Aorta (tissue), 5 donors: ENCODE measurements at regions of chr10 and their contacts with region 1.

Region 1: DNA sequence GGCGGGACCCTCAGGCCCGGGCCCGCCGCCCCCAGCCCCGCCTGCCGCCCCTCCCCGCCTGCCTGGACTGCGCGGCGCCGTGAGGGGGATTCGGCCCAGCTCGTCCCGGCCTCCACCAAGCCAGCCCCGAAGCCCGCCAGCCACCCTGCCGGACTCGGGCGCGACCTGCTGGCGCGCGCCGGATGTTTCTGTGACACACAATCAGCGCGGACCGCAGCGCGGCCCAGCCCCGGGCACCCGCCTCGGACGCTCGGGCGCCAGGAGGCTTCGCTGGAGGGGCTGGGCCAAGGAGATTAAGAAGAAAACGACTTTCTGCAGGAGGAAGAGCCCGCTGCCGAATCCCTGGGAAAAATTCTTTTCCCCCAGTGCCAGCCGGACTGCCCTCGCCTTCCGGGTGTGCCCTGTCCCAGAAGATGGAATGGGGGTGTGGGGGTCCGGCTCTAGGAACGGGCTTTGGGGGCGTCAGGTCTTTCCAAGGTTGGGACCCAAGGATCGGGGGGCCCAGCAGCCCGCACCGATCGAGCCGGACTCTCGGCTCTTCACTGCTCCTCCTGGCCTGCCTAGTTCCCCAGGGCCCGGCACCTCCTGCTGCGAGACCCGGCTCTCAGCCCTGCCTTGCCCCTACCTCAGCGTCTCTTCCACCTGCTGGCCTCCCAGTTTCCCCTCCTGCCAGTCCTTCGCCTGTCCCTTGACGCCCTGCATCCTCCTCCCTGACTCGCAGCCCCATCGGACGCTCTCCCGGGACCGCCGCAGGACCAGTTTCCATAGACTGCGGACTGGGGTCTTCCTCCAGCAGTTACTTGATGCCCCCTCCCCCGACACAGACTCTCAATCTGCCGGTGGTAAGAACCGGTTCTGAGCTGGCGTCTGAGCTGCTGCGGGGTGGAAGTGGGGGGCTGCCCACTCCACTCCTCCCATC is 82.7 kb downstream of the PAX2 start:
- DNase-seq: peak in 1 of 2 donors; percentile 55
- ATAC-seq: no peak
- H3K4me3 ChIP-seq: peak overlapping the region; percentile 13 to 18
- H3K27ac ChIP-seq: no peak overlapping the region
- H3K4me1 ChIP-seq: no peaks in the 10 kb centered on the region
- H3K27me3 ChIP-seq: no peaks in the 10 kb centered on the region

Region 2: GRCh38 chr10:100743626-100744135 is 84.4 kb before region 1 on chr10:
- intact Hi-C with region 1: no loop called
- DNase-seq: no peak
- ATAC-seq: no peak
- H3K4me3 ChIP-seq: no peak overlapping the region
- H3K27ac ChIP-seq: no peak overlapping the region
- H3K4me1 ChIP-seq: no peaks in the 10 kb centered on the region
- H3K27me3 ChIP-seq: no peaks in the 10 kb centered on the region

Region 3: DNA sequence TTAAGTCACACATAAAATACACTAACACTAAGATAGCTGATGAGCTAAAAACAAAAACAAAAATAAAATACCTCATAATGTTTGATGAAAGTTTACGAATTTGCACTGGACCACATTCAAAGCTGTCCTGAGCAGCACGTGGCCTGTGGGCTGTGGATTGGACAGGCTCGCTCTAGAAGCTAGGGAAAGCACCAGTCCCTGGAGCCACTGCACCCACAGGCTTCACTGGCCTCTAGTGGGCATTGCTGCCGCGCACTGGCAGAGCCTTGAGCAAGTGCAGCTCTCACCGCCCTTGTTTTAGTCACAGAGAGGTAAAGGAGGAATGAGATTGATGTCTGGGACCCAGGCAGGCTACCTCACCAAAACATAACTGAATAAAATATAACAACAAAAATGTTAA is 15.1 kb before region 1 on chr10:
- intact Hi-C with region 1: loop called in 1 of 2 experiments (anchors 1 kb)
- DNase-seq: peak in 1 of 2 donors; percentile 20
- ATAC-seq: no peak
- H3K4me3 ChIP-seq: no peak overlapping the region
- H3K27ac ChIP-seq: no peak overlapping the region
- H3K4me1 ChIP-seq: no peaks in the 10 kb centered on the region
- H3K27me3 ChIP-seq: no peaks in the 10 kb centered on the region